ENCODE measurements at regions of chr11 and their contacts with region 1.

Region 1: GRCh38 chr11:123235117-123235655 is 40.1 kb upstream of the CLMP start:
- DNase-seq: peak; percentile 38
- ATAC-seq: peak; percentile 86
- H3K4me3 ChIP-seq: no peak overlapping the region
- H3K27ac ChIP-seq: no peak overlapping the region
- H3K4me1 ChIP-seq: no peaks in the 10 kb centered on the region
- H3K27me3 ChIP-seq: 0 out of 2 replicates have a peak, but pooled peaks cover 5% of the 10 kb centered on the region
- CTCF ChIP-seq: peak; percentile 34 to 91 (median 84); a peak in 5 of 6 replicates
- POLR2A ChIP-seq: no peak
- RAD21 ChIP-seq: peak; percentile 35

Region 2: DNA sequence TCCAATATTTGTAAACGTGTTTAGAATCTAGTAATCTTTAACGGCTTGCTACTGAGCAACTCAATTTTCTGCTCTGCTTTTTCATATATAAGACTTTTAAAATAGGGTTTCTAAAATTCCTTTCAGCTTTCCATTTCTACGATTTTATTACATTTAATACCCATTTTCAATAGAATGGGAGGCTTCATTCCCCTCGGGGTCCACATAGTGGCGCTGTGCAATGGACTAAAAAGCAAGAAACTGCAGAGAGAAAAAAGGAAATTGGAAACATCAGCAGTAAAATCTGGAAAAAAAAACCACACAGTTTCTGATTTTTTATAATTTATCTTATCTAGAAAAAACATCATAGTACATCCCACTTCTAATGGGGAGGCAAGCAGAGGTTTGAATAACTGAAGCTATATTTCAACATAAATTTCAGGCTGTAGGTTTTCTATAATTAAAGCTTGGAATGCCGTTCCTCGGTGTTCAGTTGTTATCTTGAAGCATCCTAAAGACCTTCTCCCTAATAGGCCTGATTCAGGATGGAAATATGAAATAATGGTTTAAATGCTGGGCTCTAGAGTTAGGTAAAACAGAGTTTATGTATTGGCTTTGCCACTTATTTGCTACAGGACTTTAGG is 371.4 kb before region 1 on chr11:
- CTCF ChIA-PET with region 1: no interaction called
- POLR2A ChIA-PET with region 1: no interaction called
- RAD21 ChIA-PET with region 1: no interaction called
- intact Hi-C with region 1: loop called (anchors 5 kb)
- DNase-seq: peak; percentile 37
- ATAC-seq: peak; percentile 58; the same call in 1 of the 2 replicates
- H3K4me3 ChIP-seq: no peak overlapping the region
- H3K27ac ChIP-seq: no peak overlapping the region
- H3K4me1 ChIP-seq: peaks cover 0 to 3% of the 10 kb centered on the region in 2 experiments; a peak in 2 of 4 replicates
- H3K27me3 ChIP-seq: peaks cover 4% of the 10 kb centered on the region; the same call in 1 of the 2 replicates
- CTCF ChIP-seq: peak; percentile 88 to 91 (median 88)
- POLR2A ChIP-seq: no peak
- RAD21 ChIP-seq: peak; percentile 83

Region 3: GRCh38 chr11:123103326-123103980 is 131.7 kb before region 1 on chr11:
- CTCF ChIA-PET with region 1: interaction called, 44 read pairs
- POLR2A ChIA-PET with region 1: no interaction called
- RAD21 ChIA-PET with region 1: interaction called, 4 read pairs
- intact Hi-C with region 1: no loop called
- DNase-seq: peak; percentile 60
- ATAC-seq: peak; percentile 81
- H3K4me3 ChIP-seq: no peak overlapping the region
- H3K27ac ChIP-seq: no peak overlapping the region
- H3K4me1 ChIP-seq: peaks cover 0 to 6% of the 10 kb centered on the region in 2 experiments; a peak in 3 of 4 replicates
- H3K27me3 ChIP-seq: no peaks in the 10 kb centered on the region
- CTCF ChIP-seq: peak; percentile 70 to 76 (median 75)
- POLR2A ChIP-seq: no peak
- RAD21 ChIP-seq: peak; percentile 84

Region 4: GRCh38 chr11:123110356-123110755 is 124.8 kb before region 1 on chr11:
- CTCF ChIA-PET with region 1: interaction called, 44 read pairs
- POLR2A ChIA-PET with region 1: no interaction called
- RAD21 ChIA-PET with region 1: no interaction called
- intact Hi-C with region 1: loop called (anchors 1 kb)
- DNase-seq: no peak
- ATAC-seq: no peak
- H3K4me3 ChIP-seq: no peak overlapping the region
- H3K27ac ChIP-seq: no peak overlapping the region
- H3K4me1 ChIP-seq: peaks cover 0 to 3% of the 10 kb centered on the region in 2 experiments; a peak in 2 of 4 replicates
- H3K27me3 ChIP-seq: no peaks in the 10 kb centered on the region
- CTCF ChIP-seq: no peak
- POLR2A ChIP-seq: no peak
- RAD21 ChIP-seq: no peak

Region 5: DNA sequence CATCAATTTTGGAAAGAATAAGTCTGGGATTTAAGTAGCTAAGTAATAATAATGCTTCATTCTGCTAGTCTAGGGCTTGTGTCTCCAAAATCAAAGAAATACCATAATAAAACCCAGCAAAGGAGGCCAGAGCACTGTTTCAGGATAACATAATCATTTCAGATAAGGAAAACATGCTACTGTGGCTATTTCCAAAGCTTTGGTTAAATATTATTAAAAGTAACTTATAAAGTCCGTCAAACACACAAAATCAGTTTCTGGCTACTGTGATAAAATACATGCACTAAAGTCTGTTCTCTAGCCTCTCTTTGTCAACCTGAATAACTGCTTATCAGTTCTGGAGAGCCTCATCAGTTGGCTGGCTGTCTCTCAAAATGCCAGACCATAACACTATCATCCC is 709.9 kb after region 1 on chr11:
- CTCF ChIA-PET with region 1: no interaction called
- POLR2A ChIA-PET with region 1: no interaction called
- RAD21 ChIA-PET with region 1: no interaction called
- intact Hi-C with region 1: no loop called
- DNase-seq: no peak
- ATAC-seq: no peak
- H3K4me3 ChIP-seq: no peak overlapping the region
- H3K27ac ChIP-seq: no peak overlapping the region
- H3K4me1 ChIP-seq: no peaks in the 10 kb centered on the region
- H3K27me3 ChIP-seq: 0 out of 2 replicates have a peak, but pooled peaks cover 6% of the 10 kb centered on the region
- CTCF ChIP-seq: no peak
- POLR2A ChIP-seq: no peak
- RAD21 ChIP-seq: no peak

Measured in HCT116 (cell line).